Activated CD4-positive, alpha-beta T cell treated with anti-CD3 and anti-CD28 coated beads for 36 hours (primary cell): ENCODE measurements at regions of chr7 and their contacts with region 1.

Region 1: GRCh38 chr7:23273141-23273599 is 26.0 kb upstream of the MALSU1 start:
- DNase-seq: peak; percentile 96
- ATAC-seq: peak; percentile 97
- H3K4me3 Mint-ChIP-seq: peak overlapping the region; percentile 59
- H3K27ac Mint-ChIP-seq: peak overlapping the region; percentile 58
- H3K4me1 Mint-ChIP-seq: peaks cover 8% of the 10 kb centered on the region
- H3K27me3 Mint-ChIP-seq: peaks cover 4% of the 10 kb centered on the region

Region 2: DNA sequence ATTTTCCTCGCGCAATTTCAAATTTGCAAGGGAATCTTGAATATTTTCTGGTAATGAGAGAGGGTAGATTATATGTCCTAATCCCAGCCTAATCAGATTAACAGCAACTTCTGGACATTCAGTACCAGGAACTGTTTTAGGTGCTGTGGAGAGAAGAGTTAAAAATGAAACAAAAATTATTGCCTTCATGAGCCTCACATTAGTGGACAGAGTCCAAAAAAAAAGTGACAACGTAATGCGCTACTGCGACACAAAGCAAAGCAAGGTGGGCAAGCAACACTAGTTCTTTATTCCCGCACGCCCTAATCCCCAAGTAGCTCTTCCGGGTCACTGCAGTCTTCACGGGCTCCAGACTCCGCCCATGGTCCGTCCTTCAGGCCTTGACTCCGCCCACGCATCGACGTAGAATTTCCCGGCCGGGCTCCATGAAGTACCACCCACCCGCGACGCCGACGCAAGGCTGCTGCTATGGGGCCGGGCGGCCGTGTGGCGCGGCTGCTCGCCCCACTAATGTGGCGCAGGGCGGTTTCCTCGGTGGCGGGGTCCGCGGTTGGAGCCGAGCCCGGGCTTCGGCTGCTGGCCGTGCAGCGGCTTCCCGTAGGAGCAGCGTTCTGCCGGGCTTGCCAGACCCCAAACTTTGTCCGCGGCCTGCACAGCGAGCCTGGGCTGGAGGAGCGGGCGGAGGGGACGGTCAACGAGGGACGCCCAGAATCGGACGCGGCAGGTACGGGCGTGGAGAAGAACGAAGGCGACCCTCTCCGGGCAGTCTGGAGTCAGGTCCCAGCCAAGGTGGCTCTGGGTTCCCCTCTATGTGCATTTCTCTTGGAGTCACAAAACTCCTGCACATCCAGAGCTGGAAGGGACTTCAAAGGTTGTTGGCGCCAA is 26.0 kb after region 1 on chr7 and contains the start of gene MALSU1:
- CTCF ChIA-PET with region 1: interaction called, 13 read pairs
- POLR2A ChIA-PET with region 1: no interaction called
- intact Hi-C with region 1: loop called (anchors 1 to 2 kb)
- DNase-seq: peak; percentile 99
- ATAC-seq: peak; percentile 97
- H3K4me3 Mint-ChIP-seq: peak within 1 kb of the TSS; percentile 98
- H3K27ac Mint-ChIP-seq: peak within 1 kb of the TSS; percentile 97
- H3K4me1 Mint-ChIP-seq: peaks cover 38% of the 10 kb centered on the region
- H3K27me3 Mint-ChIP-seq: no peaks in the 10 kb centered on the region
- total RNA-seq, gene MALSU1: 97.7 to 98.4 TPM

Region 3: GRCh38 chr7:23431702-23432199 is 158.6 kb after region 1 on chr7:
- CTCF ChIA-PET with region 1: interaction called, 11 read pairs
- POLR2A ChIA-PET with region 1: no interaction called
- intact Hi-C with region 1: no loop called
- DNase-seq: no peak
- ATAC-seq: no peak
- H3K4me3 Mint-ChIP-seq: no peak overlapping the region
- H3K27ac Mint-ChIP-seq: no peak overlapping the region
- H3K4me1 Mint-ChIP-seq: peaks cover 2% of the 10 kb centered on the region
- H3K27me3 Mint-ChIP-seq: peaks cover 25% of the 10 kb centered on the region

Region 4: DNA sequence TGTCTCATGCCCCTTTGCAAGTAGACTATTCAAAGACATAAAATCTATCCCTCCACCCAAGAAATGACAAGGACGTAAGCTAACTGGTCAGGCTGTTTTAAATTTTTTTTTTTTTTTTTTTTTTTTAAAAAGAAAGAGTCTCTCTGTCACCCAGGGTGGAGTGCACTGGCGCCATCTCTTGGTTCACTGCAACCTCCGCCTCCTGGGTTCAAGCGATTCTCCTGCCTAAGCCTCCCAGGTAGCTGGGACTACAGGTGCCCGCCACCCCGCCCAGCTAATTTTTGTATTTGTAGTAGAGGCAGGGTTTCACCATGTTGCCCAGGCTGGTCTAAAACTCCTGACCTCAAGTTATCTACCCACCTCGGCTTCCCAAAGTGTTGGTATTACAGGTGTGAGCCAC is 247.4 kb after region 1 on chr7:
- CTCF ChIA-PET with region 1: interaction called, 23 read pairs
- POLR2A ChIA-PET with region 1: no interaction called
- intact Hi-C with region 1: no loop called
- DNase-seq: peak; percentile 52
- ATAC-seq: no peak
- H3K4me3 Mint-ChIP-seq: no peak overlapping the region
- H3K27ac Mint-ChIP-seq: no peak overlapping the region
- H3K4me1 Mint-ChIP-seq: peaks cover 42% of the 10 kb centered on the region
- H3K27me3 Mint-ChIP-seq: no peaks in the 10 kb centered on the region

Region 5: DNA sequence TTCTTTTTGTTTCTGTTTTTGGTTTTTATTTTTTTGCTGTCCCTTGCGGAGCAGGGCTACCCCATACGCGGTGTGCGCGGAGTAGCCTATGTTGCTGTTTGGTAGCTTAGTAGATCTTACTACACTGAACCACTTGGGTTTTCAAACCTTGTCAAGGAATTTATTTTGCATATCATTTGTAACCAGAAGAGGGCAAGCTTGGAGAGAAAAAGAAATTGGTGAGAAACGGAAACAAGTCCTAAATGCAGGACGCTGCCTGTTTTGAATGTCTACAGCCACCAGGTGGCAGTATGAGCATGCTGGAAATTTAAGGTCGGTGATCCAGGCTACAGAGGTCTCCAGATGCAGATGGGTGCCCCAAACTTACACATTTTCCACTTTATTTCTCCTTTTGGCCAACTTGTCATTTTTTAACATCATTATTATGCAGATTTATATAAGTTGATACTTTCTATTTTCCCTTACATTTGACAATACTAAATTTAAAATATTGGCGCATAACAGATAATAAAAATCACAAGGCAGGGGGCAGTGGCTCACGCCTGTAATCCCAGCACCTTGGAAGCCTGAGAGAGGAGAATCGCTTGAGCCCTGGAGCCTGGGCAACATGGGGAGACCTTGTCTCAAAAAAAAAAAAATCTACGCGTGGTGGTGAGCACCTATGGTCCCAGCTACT is 273.9 kb after region 1 on chr7:
- CTCF ChIA-PET with region 1: interaction called, 54 read pairs
- POLR2A ChIA-PET with region 1: no interaction called
- intact Hi-C with region 1: loop called (anchors 1 kb)
- DNase-seq: peak; percentile 83
- ATAC-seq: peak; percentile 83
- H3K4me3 Mint-ChIP-seq: no peak overlapping the region
- H3K27ac Mint-ChIP-seq: no peak overlapping the region
- H3K4me1 Mint-ChIP-seq: peaks cover 5% of the 10 kb centered on the region
- H3K27me3 Mint-ChIP-seq: peaks cover 2% of the 10 kb centered on the region